Psoas muscle (tissue), 8 donors: ENCODE measurements at regions of chr7 and their contacts with region 1.

Region 1: GRCh38 chr7:80781561-80781979 is 137.3 kb downstream of the SEMA3C start:
- DNase-seq: no peak
- ATAC-seq: peak; percentile 51 to 88 (median 79)
- H3K4me3 ChIP-seq: no peak overlapping the region
- H3K27ac ChIP-seq: no peak overlapping the region
- H3K4me1 ChIP-seq: peaks cover 41% of the 10 kb centered on the region
- H3K27me3 ChIP-seq: no peaks in the 10 kb centered on the region
- CTCF ChIP-seq: no peak

Region 2: DNA sequence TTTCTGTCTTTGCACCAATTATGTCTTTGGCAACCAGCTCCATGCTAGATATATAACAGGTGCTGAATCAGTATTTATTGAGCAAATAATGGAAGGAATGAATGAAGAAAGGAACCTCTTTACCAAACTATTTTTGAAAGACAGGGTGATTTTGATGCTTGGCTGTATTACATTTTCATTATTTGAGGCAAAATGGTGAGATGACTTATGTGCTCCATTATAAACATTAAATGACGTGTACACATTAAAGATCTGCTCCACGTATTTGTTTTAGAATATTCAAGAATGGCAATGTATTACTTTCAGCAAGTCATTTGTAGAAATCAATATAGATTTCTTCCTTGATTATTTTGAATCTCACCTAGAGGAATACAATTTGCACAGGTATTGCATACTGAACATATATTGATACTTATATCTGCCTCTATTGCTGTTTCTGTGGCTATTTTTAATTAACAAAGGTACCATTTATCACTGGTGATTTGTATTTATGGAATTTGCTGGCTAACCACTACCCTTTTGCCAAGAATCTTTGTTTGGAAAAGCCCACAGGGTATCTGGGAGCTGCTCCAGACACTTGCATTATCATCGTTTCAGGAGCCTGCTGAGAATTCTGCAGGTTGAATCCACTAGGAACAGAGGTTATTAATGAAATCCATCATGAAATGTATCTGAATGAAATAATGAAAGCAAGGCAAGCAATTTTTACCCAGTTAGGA is 45.1 kb after region 1 on chr7:
- intact Hi-C with region 1: loop called in 1 of 2 experiments (anchors 2 kb)
- DNase-seq: no peak
- ATAC-seq: peak in 1 of 4 donors; percentile 12
- H3K4me3 ChIP-seq: no peak overlapping the region
- H3K27ac ChIP-seq: no peak overlapping the region
- H3K4me1 ChIP-seq: peaks cover 51% of the 10 kb centered on the region
- H3K27me3 ChIP-seq: no peaks in the 10 kb centered on the region
- CTCF ChIP-seq: no peak

Region 3: DNA sequence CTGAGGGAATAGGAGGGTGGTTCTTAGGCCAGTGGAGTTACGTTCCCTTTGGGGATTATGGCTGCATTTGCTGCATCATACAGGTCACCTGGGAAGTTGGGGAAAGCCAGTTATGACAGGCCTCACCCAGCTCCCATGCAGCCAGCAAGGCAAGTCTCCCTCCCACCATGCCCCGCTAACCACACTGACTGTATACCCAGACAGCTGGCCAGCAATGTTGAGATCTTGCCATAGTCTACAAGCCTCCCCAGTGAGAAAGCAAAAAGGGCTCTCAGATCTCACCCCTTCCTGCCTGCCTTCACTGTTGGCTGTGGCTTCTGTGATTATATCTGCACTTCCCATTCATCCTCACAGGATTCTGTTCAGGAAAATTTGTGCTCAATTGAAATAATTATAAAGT is 1121.5 kb after region 1 on chr7:
- intact Hi-C with region 1: no loop called
- DNase-seq: no peak
- ATAC-seq: no peak
- H3K4me3 ChIP-seq: no peak overlapping the region
- H3K27ac ChIP-seq: no peak overlapping the region
- H3K4me1 ChIP-seq: no peaks in the 10 kb centered on the region
- H3K27me3 ChIP-seq: no peaks in the 10 kb centered on the region
- CTCF ChIP-seq: no peak